Natural killer cell (primary cell): ENCODE measurements at regions of chr16 and their contacts with region 1.

Region 1: GRCh38 chr16:2867987-2868789 is 10.2 kb upstream of the PRSS22 start:
- DNase-seq: peak; percentile 97 to 99
- ATAC-seq: peak; percentile 96 to 99 (median 97)
- H3K4me3 ChIP-seq: peak overlapping the region; percentile 57
- H3K4me3 Mint-ChIP-seq: peak overlapping the region; percentile 87
- H3K27ac ChIP-seq: peak overlapping the region; percentile 83
- H3K27ac Mint-ChIP-seq: peak overlapping the region; percentile 94 to 98
- H3K4me1 ChIP-seq: peaks cover 14% of the 10 kb centered on the region
- H3K4me1 Mint-ChIP-seq: peaks cover 9 to 12% of the 10 kb centered on the region in 2 donors
- H3K27me3 ChIP-seq: no peaks in the 10 kb centered on the region
- H3K27me3 Mint-ChIP-seq: peaks cover 0 to 2% of the 10 kb centered on the region in 2 donors
- CTCF ChIP-seq: peak; percentile 96

Region 2: DNA sequence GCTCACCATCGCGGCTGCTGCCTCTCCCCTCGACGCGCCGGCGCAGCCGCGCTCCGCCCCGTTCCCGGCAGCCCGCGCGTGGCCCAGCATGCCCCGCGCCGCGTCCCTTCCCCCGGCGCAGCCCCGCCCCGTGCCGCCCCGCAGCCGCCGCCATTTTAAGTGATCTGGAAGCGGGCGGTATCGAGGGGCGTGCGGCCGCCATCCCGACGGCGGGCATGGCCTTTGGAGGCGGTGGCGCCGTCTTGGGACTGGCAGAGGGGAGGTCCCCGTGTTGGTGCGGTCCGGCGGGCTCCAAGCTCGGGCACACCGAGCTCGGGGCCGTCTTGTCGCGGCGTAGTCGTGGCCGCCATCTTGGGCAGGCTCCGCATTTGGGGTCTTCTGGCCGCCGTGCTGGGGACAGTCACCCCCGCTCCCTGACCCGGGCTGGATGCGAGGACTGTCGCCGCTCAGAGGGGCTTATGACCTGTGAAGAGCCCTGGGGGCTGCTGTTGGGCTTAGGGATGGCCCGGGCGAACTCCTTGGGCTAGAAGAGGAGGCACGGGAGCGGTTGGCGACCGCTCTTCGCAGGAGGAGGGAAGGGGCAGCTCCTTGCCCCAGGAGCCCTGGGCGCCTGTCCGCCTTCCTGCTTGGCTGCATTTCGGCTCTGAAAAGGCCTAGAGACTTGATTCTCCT is 90.8 kb before region 1 on chr16 and contains the start of gene ELOB:
- intact Hi-C with region 1: loop called (anchors 2 kb)
- DNase-seq: peak; percentile 88 to 94
- ATAC-seq: peak; percentile 87 to 97 (median 88)
- H3K4me3 ChIP-seq: peak within 1 kb of the TSS; percentile 95
- H3K4me3 Mint-ChIP-seq: peak within 1 kb of the TSS; percentile 90
- H3K27ac ChIP-seq: peak within 1 kb of the TSS; percentile 95
- H3K27ac Mint-ChIP-seq: peak within 1 kb of the TSS; percentile 93 to 95
- H3K4me1 ChIP-seq: peaks cover 49% of the 10 kb centered on the region
- H3K4me1 Mint-ChIP-seq: peaks cover 25 to 32% of the 10 kb centered on the region in 2 donors
- H3K27me3 ChIP-seq: no peaks in the 10 kb centered on the region
- H3K27me3 Mint-ChIP-seq: no peaks in the 10 kb centered on the region
- CTCF ChIP-seq: no peak
- total RNA-seq, gene ELOB: 146 to 207 (median 161) TPM

Region 3: GRCh38 chr16:2838928-2839327 is 29.3 kb before region 1 on chr16:
- intact Hi-C with region 1: loop called (anchors 1 kb)
- DNase-seq: peak; percentile 58 to 81
- ATAC-seq: peak; percentile 37 to 61 (median 46)
- H3K4me3 ChIP-seq: no peak overlapping the region
- H3K4me3 Mint-ChIP-seq: peak overlapping the region; percentile 75
- H3K27ac ChIP-seq: peak overlapping the region; percentile 6
- H3K27ac Mint-ChIP-seq: peak overlapping the region; percentile 30 to 96
- H3K4me1 ChIP-seq: peaks cover 56% of the 10 kb centered on the region
- H3K4me1 Mint-ChIP-seq: peaks cover 58 to 60% of the 10 kb centered on the region in 2 donors
- H3K27me3 ChIP-seq: no peaks in the 10 kb centered on the region
- H3K27me3 Mint-ChIP-seq: no peaks in the 10 kb centered on the region
- CTCF ChIP-seq: peak; percentile 80

Region 4: DNA sequence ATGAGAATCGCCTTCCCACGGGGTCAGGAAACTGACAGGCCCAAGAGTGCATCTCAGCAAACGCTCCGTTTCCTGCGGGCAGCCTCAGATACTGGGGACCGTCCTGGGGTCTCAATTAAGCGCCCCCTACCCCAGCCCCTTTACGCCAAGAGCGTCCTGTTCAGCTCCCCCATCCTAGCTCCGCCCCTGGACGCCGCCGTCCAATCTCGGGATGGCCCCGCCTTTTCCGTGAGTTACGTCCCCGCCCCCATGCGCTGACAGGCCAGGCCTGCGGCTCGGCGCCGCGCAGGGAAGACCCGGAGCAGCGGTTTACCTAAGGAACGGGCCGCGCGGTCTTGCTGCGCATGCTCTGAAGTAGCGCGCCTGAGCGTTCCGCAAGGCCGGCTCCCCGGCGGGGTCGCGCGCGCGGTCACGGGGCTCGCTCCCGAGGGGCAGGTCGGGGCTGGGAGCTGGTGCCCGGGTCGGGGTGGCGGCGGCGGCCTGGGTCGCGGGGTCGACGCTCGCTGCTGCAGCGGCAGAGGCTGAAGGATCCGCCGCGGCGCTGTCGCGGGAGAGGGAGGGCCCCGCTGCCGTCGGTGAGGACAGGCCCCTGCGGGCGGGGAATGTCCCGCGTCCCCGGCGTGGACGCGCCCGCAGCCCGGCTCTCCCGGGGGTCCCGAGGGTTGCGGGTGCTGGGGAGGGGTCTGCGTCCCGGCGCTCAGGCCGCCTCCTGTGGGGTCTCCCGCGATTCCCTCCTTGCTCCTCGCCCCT is 43.6 kb after region 1 on chr16 and contains the start of gene FLYWCH1:
- intact Hi-C with region 1: loop called (anchors 5 kb)
- DNase-seq: peak; percentile 96 to 99
- ATAC-seq: peak; percentile 95 to 99 (median 96)
- H3K4me3 ChIP-seq: peak within 1 kb of the TSS; percentile 81
- H3K4me3 Mint-ChIP-seq: peak within 1 kb of the TSS; percentile 95
- H3K27ac ChIP-seq: peak within 1 kb of the TSS; percentile 77
- H3K27ac Mint-ChIP-seq: peak within 1 kb of the TSS; percentile 88 to 95
- H3K4me1 ChIP-seq: peaks cover 22% of the 10 kb centered on the region
- H3K4me1 Mint-ChIP-seq: peaks cover 19 to 26% of the 10 kb centered on the region in 2 donors
- H3K27me3 ChIP-seq: no peaks in the 10 kb centered on the region
- H3K27me3 Mint-ChIP-seq: no peaks in the 10 kb centered on the region
- CTCF ChIP-seq: no peak
- total RNA-seq, gene FLYWCH1: 85.1 to 148 (median 130) TPM

Region 5: DNA sequence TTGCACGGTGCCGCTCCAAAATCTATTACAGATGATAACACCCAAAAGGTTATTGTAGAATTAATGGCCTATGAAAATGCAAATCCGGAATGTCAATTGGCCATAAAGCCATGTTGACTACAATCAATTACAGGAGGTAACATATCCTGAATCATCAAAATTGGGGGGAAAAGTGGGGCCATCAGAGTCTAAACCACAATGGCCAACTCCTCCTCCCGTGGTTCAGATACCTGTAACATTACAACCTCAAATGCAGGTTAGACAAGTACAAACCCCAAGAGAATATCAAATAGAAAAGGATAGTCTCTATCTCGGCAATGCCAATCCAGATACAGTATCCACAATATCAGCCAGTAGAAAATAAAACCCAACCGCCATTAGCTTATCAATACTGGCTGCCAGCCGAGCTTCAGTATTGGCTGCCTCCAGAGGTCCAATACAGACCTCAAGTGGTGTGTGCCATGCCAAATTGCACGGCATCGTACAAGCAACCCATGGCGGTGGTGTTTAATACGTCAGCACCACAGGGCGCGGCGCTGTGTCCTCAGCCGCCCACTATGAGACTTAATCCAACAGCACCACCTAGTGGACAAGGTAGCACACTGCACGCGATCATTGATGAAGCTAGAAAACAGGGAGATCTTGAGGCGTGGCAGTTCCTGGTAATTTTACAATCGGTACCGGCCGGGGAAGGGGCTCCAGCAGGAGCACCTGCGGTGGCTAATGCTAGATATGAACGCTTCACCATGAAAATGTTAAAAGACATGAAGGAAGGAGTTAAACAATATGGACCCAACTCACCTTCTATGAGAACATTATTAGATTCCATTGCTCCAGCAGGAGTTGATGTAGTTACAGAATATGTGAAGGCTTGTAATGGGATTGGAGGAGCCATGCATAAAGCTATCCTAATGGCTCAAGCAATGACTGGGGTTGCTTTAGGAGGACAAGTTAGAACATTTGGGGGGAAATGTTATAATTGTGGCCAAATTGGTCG is 58.8 kb after region 1 on chr16:
- intact Hi-C with region 1: loop called (anchors 2 kb)
- DNase-seq: peak; percentile 81 to 95
- ATAC-seq: peak; percentile 100
- H3K4me3 ChIP-seq: no peak overlapping the region
- H3K4me3 Mint-ChIP-seq: no peak overlapping the region
- H3K27ac ChIP-seq: no peak overlapping the region
- H3K27ac Mint-ChIP-seq: peak overlapping the region in 1 of 2 donors; percentile 46
- H3K4me1 ChIP-seq: peaks cover 7% of the 10 kb centered on the region
- H3K4me1 Mint-ChIP-seq: peaks cover 9 to 16% of the 10 kb centered on the region in 2 donors
- H3K27me3 ChIP-seq: no peaks in the 10 kb centered on the region
- H3K27me3 Mint-ChIP-seq: no peaks in the 10 kb centered on the region
- CTCF ChIP-seq: peak; percentile 97